PC-3 (cell line): ENCODE measurements at regions of chr19 and their contacts with region 1.

Region 1: DNA sequence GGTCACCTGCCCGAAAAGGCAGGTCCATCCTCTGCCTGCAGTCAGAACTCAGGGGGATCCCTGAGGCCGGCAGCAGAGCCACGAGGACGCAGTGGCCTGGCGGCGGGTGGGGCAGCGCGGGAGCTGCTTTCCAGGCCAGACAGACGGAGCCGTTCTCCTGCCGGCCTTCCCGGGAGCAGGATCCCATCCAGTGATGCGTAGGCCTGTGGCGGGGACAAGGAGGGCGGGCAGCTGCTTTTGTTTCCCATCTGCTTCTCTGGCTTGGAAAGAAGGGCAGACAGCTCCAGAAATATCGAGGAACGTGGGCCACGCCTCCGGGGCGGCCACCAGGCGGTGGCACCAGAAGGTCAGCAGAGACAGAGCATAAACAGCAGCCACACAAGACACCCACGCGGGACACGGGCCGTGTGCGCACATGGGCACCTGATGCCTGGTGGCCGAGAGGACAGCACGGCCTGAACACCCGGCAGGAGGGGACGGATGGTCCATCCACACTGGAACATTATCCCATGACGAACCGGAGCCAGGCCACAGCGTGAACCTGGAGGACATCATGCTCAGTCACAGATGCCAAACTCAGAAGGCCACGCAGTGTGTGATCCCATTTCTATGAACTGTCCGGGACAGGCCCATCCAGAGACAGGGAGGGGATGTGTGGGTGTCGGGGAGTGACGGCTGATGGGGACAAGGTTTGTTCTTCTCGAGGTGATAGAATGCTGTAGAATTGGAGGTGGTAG is 13.9 kb upstream of the MKNK2 start:
- DNase-seq: no peak
- ATAC-seq: no peak
- H3K4me3 ChIP-seq: no peak overlapping the region
- H3K27ac ChIP-seq: no peak overlapping the region
- H3K4me1 ChIP-seq: peaks cover 18% of the 10 kb centered on the region
- H3K27me3 ChIP-seq: no peaks in the 10 kb centered on the region
- CTCF ChIP-seq: no peak

Region 2: DNA sequence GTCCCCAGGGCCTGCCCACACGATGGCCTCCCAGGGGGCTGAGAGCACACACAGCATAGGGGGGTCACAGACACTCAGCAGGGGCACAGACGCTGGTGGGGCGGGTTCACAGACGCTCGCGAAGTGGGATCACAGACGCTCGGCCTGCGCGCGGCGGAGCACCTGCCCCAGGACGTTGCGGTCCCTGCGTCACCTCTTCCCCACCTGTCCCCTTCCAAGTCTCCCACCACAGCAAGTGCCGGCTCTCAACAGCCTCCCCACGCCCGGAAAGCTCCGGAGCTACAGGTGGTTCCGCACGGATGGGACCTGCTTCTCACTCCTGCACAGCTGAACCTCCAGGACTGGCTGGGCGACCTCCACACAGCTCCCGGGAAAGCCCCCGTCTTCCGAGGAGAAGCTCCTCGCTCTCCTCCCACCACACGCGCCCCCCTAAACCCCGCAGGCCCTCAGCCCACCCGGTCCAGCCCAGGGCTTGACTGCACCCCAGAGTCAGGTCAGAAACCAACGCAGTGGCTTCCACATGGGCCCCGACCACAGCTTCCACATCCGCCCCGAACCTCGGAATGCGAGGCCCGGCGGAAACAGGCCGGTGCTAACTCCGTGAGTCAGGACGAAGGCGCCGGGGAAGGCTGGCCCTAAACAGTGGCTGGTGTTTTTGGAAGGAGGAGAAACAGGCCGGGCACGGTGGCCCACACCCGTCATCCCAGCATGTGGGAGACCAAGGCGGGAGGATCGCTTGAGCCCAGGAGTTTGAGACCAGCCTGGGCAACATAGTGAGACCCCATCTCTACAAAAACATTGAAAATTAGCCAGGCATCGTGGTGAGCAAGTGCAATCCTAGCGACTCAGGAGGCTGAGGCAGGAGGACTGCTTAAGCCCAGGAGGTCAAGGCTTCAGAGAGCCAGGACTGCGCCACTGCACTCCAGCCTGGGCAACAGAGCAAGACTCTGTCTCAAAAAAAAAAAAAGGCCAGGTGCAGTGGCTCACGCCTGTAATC is 65.9 kb before region 1 on chr19:
- CTCF ChIA-PET with region 1: no interaction called
- POLR2A ChIA-PET with region 1: no interaction called
- intact Hi-C with region 1: no loop called
- DNase-seq: no peak
- ATAC-seq: no peak
- H3K4me3 ChIP-seq: no peak overlapping the region
- H3K27ac ChIP-seq: no peak overlapping the region
- H3K4me1 ChIP-seq: no peaks in the 10 kb centered on the region
- H3K27me3 ChIP-seq: no peaks in the 10 kb centered on the region
- CTCF ChIP-seq: no peak

Region 3: GRCh38 chr19:2018752-2019151 is 46.2 kb before region 1 on chr19:
- CTCF ChIA-PET with region 1: no interaction called
- POLR2A ChIA-PET with region 1: no interaction called
- intact Hi-C with region 1: loop called (anchors 1 kb)
- DNase-seq: no peak
- ATAC-seq: no peak
- H3K4me3 ChIP-seq: no peak overlapping the region
- H3K27ac ChIP-seq: no peak overlapping the region
- H3K4me1 ChIP-seq: peaks cover 3% of the 10 kb centered on the region; the same call in 1 of the 2 replicates
- H3K27me3 ChIP-seq: no peaks in the 10 kb centered on the region
- CTCF ChIP-seq: no peak